ENCODE measurements at regions of chr10 and their contacts with region 1.

Region 1: DNA sequence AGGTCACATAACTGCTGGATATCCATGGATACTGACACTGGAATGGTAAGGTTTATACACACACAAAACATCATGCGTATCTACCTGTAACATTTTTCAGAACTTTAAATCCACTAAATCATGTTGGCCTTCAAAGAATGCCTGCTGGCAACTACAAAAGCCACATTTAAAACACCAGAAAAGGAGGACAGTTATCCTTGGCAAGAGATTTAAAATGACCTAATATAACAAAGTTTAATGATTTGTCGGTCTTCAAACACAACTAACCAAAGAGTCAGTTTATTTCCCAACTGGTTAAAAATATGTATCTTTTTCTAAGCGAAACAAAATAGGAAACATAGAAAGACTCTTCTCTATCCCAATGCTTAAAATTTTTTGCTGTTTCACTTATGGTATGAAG is 24.0 kb downstream of the WAPL start:
- DNase-seq: no peak
- H3K4me3 ChIP-seq: no peak overlapping the region
- H3K27ac ChIP-seq: no peak overlapping the region
- H3K4me1 ChIP-seq: no peaks in the 10 kb centered on the region
- H3K27me3 ChIP-seq: no peaks in the 10 kb centered on the region
- CTCF ChIP-seq: no peak

Region 2: GRCh38 chr10:86178401-86179152 is 319.0 kb before region 1 on chr10:
- CTCF ChIA-PET with region 1: no interaction called
- POLR2A ChIA-PET with region 1: no interaction called
- intact Hi-C with region 1: no loop called
- DNase-seq: no peak
- H3K4me3 ChIP-seq: no peak overlapping the region
- H3K27ac ChIP-seq: no peak overlapping the region
- H3K4me1 ChIP-seq: no peaks in the 10 kb centered on the region
- H3K27me3 ChIP-seq: peaks cover 25% of the 10 kb centered on the region
- CTCF ChIP-seq: peak; percentile 37; the same call in 1 of the 2 replicates

Region 3: GRCh38 chr10:86451604-86451960 is 46.0 kb before region 1 on chr10:
- CTCF ChIA-PET with region 1: no interaction called
- POLR2A ChIA-PET with region 1: no interaction called
- intact Hi-C with region 1: loop called (anchors 5 kb)
- DNase-seq: no peak
- H3K4me3 ChIP-seq: no peak overlapping the region
- H3K27ac ChIP-seq: no peak overlapping the region
- H3K4me1 ChIP-seq: no peaks in the 10 kb centered on the region
- H3K27me3 ChIP-seq: no peaks in the 10 kb centered on the region
- CTCF ChIP-seq: no peak

Measured in PC-9 (cell line).